ENCODE measurements at regions of chr3 and their contacts with region 1.

Region 1: DNA sequence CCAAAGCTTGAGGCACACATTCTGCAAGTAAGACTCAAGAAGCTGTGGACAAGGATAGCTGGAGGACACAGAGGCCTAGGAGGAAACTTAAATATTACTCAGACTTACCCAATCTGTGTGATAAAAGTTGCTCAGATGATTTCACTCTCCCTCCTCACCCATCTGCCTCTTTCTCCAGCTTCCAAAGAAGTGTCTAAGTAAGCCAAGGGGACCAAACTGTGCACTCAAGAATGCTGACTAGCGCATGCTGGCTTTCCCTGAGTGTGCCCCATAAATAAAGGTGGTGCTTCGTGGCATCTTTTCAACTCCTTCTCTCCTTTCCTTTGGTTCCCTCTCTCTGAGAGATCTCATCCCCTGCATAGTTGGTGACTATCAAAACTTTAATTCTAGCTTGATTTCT is 211.0 kb upstream of the LMCD1 start:
- DNase-seq: no peak
- CTCF ChIP-seq: no peak

Region 2: DNA sequence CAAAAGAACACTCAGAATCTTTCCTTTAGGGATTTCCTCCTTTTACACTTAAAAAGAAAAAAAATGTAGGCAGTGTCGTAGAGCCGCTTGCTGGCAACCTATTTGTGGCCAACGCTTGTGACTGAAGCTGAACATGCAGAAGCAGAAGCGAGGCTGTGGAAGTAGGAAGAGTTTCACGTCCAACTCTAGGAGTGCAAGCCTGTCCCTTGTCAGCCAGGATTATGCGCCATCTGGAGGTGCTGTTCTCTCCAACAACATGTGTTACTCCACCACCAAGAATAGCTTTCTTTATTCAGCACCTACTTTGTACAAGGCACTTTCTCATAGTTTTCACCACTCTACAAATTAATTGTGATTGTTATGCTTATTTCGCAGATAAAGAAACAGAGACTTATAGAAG is 12.2 kb before region 1 on chr3:
- CTCF ChIA-PET with region 1: interaction called, 19 read pairs
- POLR2A ChIA-PET with region 1: no interaction called
- DNase-seq: no peak
- CTCF ChIP-seq: no peak